ENCODE measurements at regions of chr4 and their contacts with region 1.

Region 1: GRCh38 chr4:121656269-121656641 is 40.5 kb downstream of the ANXA5 start:
- DNase-seq: peak; percentile 79
- H3K4me3 ChIP-seq: no peak overlapping the region
- H3K27ac ChIP-seq: no peak overlapping the region
- H3K4me1 ChIP-seq: peaks cover 10% of the 10 kb centered on the region
- H3K27me3 ChIP-seq: no peaks in the 10 kb centered on the region
- CTCF ChIP-seq: peak; percentile 69

Region 2: DNA sequence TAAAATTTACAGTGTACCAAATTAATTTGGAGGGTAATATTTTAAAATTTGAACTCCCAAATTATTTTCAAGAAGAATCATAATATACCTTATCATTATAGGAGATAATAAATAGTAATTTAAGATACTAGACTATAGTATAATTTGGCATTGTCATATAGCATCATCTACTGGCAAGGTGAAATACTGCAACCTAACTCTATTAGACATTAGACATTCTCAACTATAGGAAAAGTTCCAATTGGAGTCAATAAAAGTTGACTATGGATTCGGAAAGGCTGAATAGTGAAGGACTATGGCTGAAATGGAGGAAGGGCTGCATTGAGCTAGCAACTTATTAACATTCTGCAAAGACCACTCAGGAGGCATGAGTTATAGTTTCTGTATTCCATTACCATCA is 846.7 kb before region 1 on chr4:
- CTCF ChIA-PET with region 1: no interaction called
- POLR2A ChIA-PET with region 1: no interaction called
- intact Hi-C with region 1: no loop called
- DNase-seq: no peak
- H3K4me3 ChIP-seq: no peak overlapping the region
- H3K27ac ChIP-seq: no peak overlapping the region
- H3K4me1 ChIP-seq: no peaks in the 10 kb centered on the region
- H3K27me3 ChIP-seq: no peaks in the 10 kb centered on the region
- CTCF ChIP-seq: peak; percentile 29; the same call in 1 of the 2 replicates

Region 3: DNA sequence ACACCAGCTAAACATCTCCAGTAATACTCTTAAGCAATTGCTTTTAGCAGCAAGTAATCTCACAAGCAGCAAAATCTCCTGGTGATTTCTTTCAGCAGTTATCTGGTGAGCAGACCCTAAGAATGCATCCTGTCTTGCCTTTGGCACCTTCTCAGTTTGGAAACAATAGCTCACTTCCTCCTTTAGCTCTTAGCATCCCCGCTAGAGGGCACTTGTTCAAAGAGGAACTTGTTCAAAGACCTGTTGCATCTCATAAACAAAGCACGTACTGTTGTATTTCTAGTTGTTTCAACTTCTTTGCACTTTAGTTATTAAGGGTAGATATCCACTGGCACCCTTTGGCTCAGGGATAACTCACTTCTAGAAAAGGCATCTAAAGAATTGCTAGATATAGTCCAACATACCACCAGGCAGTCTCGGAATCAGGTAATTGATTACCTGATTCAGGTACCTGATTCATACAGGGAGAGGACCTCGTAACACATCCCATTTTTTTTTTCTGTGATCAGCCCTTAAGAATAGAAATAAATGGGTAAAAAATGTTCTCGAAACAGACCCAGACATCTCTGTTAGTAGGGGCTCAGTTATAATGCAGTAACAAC is 193.5 kb before region 1 on chr4:
- CTCF ChIA-PET with region 1: interaction called, 4 read pairs
- POLR2A ChIA-PET with region 1: no interaction called
- intact Hi-C with region 1: loop called (anchors 2 kb)
- DNase-seq: peak; percentile 88
- H3K4me3 ChIP-seq: no peak overlapping the region
- H3K27ac ChIP-seq: no peak overlapping the region
- H3K4me1 ChIP-seq: peaks cover 3% of the 10 kb centered on the region
- H3K27me3 ChIP-seq: no peaks in the 10 kb centered on the region
- CTCF ChIP-seq: peak; percentile 83

Region 4: DNA sequence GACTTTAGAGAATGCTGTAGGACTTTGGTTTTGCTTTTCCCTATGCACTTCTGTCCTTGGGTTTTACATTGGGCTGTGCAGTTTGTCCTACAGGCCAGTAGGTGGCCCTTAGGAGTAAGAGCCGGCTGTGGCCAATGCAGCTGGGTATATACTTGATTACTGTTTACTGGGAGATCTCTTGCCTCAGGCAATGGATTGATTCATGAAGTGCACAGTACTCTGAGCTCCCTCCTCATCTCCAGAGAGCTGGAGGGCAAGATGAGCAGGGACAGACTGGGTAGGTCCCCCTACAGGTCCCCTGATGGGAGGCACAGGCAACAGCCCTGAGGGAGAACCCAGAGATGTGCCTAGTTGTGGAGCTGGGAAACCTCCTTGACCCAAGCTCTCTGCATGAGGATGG is 171.6 kb before region 1 on chr4:
- CTCF ChIA-PET with region 1: no interaction called
- POLR2A ChIA-PET with region 1: no interaction called
- intact Hi-C with region 1: loop called (anchors 5 kb)
- DNase-seq: peak; percentile 70
- H3K4me3 ChIP-seq: no peak overlapping the region
- H3K27ac ChIP-seq: no peak overlapping the region
- H3K4me1 ChIP-seq: no peaks in the 10 kb centered on the region
- H3K27me3 ChIP-seq: no peaks in the 10 kb centered on the region
- CTCF ChIP-seq: peak; percentile 85